Calu3 (cell line): ENCODE measurements at regions of chr2 and their contacts with region 1.

Region 1: DNA sequence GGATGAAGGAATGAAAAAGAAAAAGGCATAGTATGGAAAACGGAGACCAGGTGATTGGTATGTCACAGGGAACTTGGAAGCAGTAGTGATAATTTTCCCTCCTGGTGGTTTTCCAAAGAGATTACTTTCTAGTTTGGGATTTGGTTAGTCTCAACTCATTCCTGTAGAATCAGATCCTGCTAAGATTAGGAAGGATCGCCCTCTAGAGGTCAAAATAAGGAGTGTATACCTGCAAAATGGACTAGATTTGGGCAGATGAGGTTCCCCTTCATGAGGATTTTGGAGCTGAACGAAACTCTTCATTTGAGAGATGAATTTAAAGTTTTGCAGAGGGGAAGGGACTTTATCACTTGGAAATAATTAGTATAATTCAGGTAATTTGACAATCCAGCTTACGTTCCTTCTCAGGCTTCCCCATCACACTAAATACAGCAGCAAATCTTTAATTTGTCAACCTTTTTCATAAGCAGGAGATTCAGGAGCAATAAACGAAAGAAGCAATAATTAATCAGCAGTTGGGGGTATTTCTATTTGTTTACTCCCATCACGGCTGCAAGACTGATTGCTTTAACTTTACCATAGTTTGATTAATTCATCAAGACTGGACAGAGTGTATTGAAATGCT is 65.2 kb downstream of the CCDC195 start:
- DNase-seq: peak; percentile 37
- H3K4me3 Mint-ChIP-seq: no peak overlapping the region
- H3K27ac Mint-ChIP-seq: no peak overlapping the region
- H3K4me1 Mint-ChIP-seq: peaks cover 8% of the 10 kb centered on the region
- H3K27me3 Mint-ChIP-seq: no peaks in the 10 kb centered on the region
- CTCF ChIP-seq: peak; percentile 82

Region 2: DNA sequence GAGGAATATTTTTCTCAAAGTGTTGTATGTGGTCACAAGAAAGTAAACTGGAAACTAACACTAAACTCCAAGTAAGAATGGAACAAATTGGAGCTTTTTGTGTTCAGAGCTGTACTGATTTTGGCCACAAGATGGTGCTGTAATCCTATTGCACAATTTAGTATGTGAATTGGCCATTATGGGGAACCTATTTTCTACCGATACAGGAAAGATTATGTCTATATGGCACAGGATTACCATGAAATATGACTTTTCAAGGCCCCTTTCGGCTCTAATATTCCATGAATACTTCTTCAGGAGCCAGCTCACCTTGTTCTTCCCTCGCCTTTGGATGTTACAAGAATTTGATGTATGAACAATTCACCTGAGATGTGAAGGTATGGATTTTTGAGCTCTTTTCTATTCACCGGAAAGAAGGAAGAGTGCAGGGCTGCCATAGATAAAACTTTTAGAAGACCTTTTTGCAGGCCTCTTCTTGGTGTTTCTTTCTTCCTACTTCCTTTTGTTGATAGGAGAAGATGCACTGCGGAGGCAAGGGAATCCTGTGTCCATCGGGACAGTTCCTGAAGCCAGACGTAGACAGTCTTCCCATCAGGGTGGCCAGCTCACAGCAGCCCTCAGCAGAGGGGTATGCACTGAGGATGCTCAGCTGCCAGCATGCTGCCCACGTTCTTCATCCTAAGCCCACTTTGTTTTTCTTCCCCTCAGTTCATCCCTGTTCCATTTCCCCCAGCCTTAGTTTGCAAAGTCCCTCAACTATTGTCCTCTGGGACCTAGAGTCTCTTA is 680.4 kb before region 1 on chr2:
- CTCF ChIA-PET with region 1: no interaction called
- intact Hi-C with region 1: loop called (anchors 10 kb)
- DNase-seq: peak; percentile 62
- H3K4me3 Mint-ChIP-seq: no peak overlapping the region
- H3K27ac Mint-ChIP-seq: no peak overlapping the region
- H3K4me1 Mint-ChIP-seq: no peaks in the 10 kb centered on the region
- H3K27me3 Mint-ChIP-seq: no peaks in the 10 kb centered on the region
- CTCF ChIP-seq: peak; percentile 73

Region 3: DNA sequence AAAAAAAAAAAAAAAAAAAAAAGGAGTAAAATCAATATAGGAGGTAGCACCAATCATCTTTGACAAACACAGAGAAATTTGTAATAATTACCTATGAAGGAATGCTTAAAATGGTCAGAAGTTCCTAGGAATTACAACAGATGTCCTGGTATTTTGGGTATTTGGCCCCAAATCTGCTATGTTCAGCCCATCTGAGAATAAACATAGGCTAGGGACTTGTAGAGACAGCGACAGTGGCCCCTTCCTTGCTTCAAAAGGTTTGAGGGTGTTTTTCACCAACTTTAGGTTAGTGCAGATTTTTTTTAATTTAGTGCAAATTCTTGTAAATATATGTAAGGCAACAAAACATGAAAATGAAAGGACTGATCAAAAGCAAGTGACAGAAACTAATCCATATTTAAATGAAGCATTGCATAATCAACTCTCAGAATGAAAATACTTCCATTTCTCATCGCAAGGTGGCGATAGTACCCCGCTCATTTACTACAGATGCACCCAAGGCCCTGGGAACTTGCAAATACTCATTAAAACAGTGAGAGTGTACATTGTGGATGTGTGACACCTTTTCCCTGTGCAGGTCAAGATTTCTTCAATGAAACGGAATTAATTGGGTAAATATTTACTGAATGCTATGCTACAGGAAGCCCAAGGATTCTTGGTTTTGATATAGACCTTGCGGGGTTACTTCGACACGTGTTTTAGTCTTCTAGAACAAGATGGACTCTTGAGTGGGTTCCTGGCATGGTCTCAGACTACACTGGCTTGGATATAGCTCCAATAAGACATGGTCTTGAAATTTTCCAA is 293.6 kb before region 1 on chr2:
- CTCF ChIA-PET with region 1: interaction called, 11 read pairs
- intact Hi-C with region 1: loop called (anchors 1 kb)
- DNase-seq: peak; percentile 72
- H3K4me3 Mint-ChIP-seq: no peak overlapping the region
- H3K27ac Mint-ChIP-seq: no peak overlapping the region
- H3K4me1 Mint-ChIP-seq: no peaks in the 10 kb centered on the region
- H3K27me3 Mint-ChIP-seq: peaks cover 26% of the 10 kb centered on the region
- CTCF ChIP-seq: peak; percentile 49

Region 4: GRCh38 chr2:224449212-224450147 is 201.4 kb before region 1 on chr2:
- CTCF ChIA-PET with region 1: no interaction called
- intact Hi-C with region 1: loop called (anchors 5 kb)
- DNase-seq: peak; percentile 28
- H3K4me3 Mint-ChIP-seq: no peak overlapping the region
- H3K27ac Mint-ChIP-seq: no peak overlapping the region
- H3K4me1 Mint-ChIP-seq: no peaks in the 10 kb centered on the region
- H3K27me3 Mint-ChIP-seq: no peaks in the 10 kb centered on the region
- CTCF ChIP-seq: peak; percentile 62

Region 5: GRCh38 chr2:224479826-224480225 is 171.1 kb before region 1 on chr2:
- CTCF ChIA-PET with region 1: no interaction called
- intact Hi-C with region 1: loop called (anchors 10 kb)
- DNase-seq: no peak
- H3K4me3 Mint-ChIP-seq: no peak overlapping the region
- H3K27ac Mint-ChIP-seq: no peak overlapping the region
- H3K4me1 Mint-ChIP-seq: peaks cover 28% of the 10 kb centered on the region
- H3K27me3 Mint-ChIP-seq: no peaks in the 10 kb centered on the region
- CTCF ChIP-seq: no peak

Region 6: DNA sequence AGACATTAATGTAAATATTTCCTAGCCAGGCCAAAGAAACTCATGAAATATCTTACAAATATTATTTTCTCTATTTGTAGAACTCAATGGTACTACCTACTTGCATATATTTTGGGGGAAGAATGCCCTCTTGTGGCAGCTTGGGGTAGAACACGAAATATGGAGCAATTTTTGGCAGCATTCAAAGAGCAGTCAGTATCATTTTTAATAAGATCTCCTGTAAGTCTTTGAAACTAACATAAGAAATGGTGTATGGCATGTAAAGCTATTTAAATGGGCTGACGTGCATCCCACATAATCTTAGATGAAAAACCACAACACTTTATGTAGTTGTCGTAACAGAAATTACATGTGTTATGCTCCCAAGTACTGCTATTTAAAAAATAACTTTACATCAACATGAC is 127.5 kb after region 1 on chr2:
- CTCF ChIA-PET with region 1: no interaction called
- intact Hi-C with region 1: loop called (anchors 2 kb)
- DNase-seq: peak; percentile 67
- H3K4me3 Mint-ChIP-seq: no peak overlapping the region
- H3K27ac Mint-ChIP-seq: no peak overlapping the region
- H3K4me1 Mint-ChIP-seq: peaks cover 23% of the 10 kb centered on the region
- H3K27me3 Mint-ChIP-seq: no peaks in the 10 kb centered on the region
- CTCF ChIP-seq: peak; percentile 48